CD8-positive, alpha-beta T cell (primary cell): ENCODE measurements at regions of chr18 and their contacts with region 1.

Region 1: GRCh38 chr18:3665780-3666525 is 216.0 kb downstream of the TGIF1 start:
- DNase-seq: peak; percentile 39 to 83 (median 75)
- ATAC-seq: peak; percentile 91
- H3K4me3 ChIP-seq: no peak overlapping the region
- H3K4me3 Mint-ChIP-seq: peak overlapping the region; percentile 35
- H3K27ac ChIP-seq: no peak overlapping the region
- H3K27ac Mint-ChIP-seq: no peak overlapping the region
- H3K4me1 ChIP-seq: no peaks in the 10 kb centered on the region
- H3K4me1 Mint-ChIP-seq: peaks cover 8% of the 10 kb centered on the region
- H3K27me3 ChIP-seq: no peaks in the 10 kb centered on the region
- H3K27me3 Mint-ChIP-seq: peaks cover 2% of the 10 kb centered on the region
- CTCF ChIP-seq: peak; percentile 96

Region 2: GRCh38 chr18:3151399-3152264 is 514.3 kb before region 1 on chr18:
- CTCF ChIA-PET with region 1: interaction called, 7 read pairs
- POLR2A ChIA-PET with region 1: no interaction called
- intact Hi-C with region 1: loop called in 1 of 2 experiments (anchors 5 kb)
- DNase-seq: peak in 2 of 9 experiments; percentile 46 to 55
- ATAC-seq: no peak
- H3K4me3 ChIP-seq: no peak overlapping the region
- H3K4me3 Mint-ChIP-seq: no peak overlapping the region
- H3K27ac ChIP-seq: no peak overlapping the region
- H3K27ac Mint-ChIP-seq: no peak overlapping the region
- H3K4me1 ChIP-seq: no peaks in the 10 kb centered on the region
- H3K4me1 Mint-ChIP-seq: peaks cover 4% of the 10 kb centered on the region
- H3K27me3 ChIP-seq: no peaks in the 10 kb centered on the region
- H3K27me3 Mint-ChIP-seq: no peaks in the 10 kb centered on the region
- CTCF ChIP-seq: peak; percentile 93

Region 3: GRCh38 chr18:3323900-3324299 is 342.1 kb before region 1 on chr18:
- CTCF ChIA-PET with region 1: interaction called, 15 read pairs
- POLR2A ChIA-PET with region 1: no interaction called
- intact Hi-C with region 1: no loop called
- DNase-seq: no peak
- ATAC-seq: no peak
- H3K4me3 ChIP-seq: no peak overlapping the region
- H3K4me3 Mint-ChIP-seq: no peak overlapping the region
- H3K27ac ChIP-seq: no peak overlapping the region
- H3K27ac Mint-ChIP-seq: no peak overlapping the region
- H3K4me1 ChIP-seq: no peaks in the 10 kb centered on the region
- H3K4me1 Mint-ChIP-seq: no peaks in the 10 kb centered on the region
- H3K27me3 ChIP-seq: no peaks in the 10 kb centered on the region
- H3K27me3 Mint-ChIP-seq: peaks cover 13% of the 10 kb centered on the region
- CTCF ChIP-seq: no peak

Region 4: DNA sequence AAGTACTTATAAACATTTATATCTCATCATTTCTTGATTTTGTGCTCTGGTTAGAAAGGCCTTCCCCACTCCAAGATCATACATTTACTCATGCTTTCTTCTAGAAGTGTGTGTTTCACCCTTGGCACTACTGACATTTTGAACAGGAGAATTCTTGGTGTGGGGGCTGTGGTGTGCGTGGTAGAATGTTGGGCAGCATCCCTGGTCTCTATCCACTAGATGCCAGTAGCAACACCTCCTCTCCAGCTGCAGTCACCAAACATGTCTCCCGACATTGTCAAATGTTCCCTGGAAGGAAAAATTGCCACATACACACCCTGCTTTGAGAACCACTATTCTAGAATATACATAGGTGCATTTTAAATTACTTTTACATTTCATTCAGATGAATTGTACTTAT is 224.7 kb before region 1 on chr18:
- CTCF ChIA-PET with region 1: interaction called, 22 read pairs
- POLR2A ChIA-PET with region 1: no interaction called
- intact Hi-C with region 1: loop called in 1 of 2 experiments (anchors 1 kb)
- DNase-seq: peak in 3 of 9 experiments; percentile 16 to 67 (median 56)
- ATAC-seq: peak; percentile 67
- H3K4me3 ChIP-seq: no peak overlapping the region
- H3K4me3 Mint-ChIP-seq: no peak overlapping the region
- H3K27ac ChIP-seq: no peak overlapping the region
- H3K27ac Mint-ChIP-seq: no peak overlapping the region
- H3K4me1 ChIP-seq: no peaks in the 10 kb centered on the region
- H3K4me1 Mint-ChIP-seq: peaks cover 5% of the 10 kb centered on the region
- H3K27me3 ChIP-seq: no peaks in the 10 kb centered on the region
- H3K27me3 Mint-ChIP-seq: no peaks in the 10 kb centered on the region
- CTCF ChIP-seq: peak; percentile 20

Region 5: GRCh38 chr18:3585656-3586509 is 80.1 kb before region 1 on chr18:
- CTCF ChIA-PET with region 1: interaction called, 39 read pairs
- POLR2A ChIA-PET with region 1: interaction called, 4 read pairs
- intact Hi-C with region 1: no loop called
- DNase-seq: peak in 8 of 9 experiments; percentile 40 to 83 (median 66)
- ATAC-seq: peak; percentile 87
- H3K4me3 ChIP-seq: no peak overlapping the region
- H3K4me3 Mint-ChIP-seq: no peak overlapping the region
- H3K27ac ChIP-seq: no peak overlapping the region
- H3K27ac Mint-ChIP-seq: no peak overlapping the region
- H3K4me1 ChIP-seq: no peaks in the 10 kb centered on the region
- H3K4me1 Mint-ChIP-seq: peaks cover 8% of the 10 kb centered on the region
- H3K27me3 ChIP-seq: no peaks in the 10 kb centered on the region
- H3K27me3 Mint-ChIP-seq: no peaks in the 10 kb centered on the region
- CTCF ChIP-seq: peak; percentile 56

Region 6: GRCh38 chr18:3623769-3624545 is 42.0 kb before region 1 on chr18:
- CTCF ChIA-PET with region 1: interaction called, 12 read pairs
- POLR2A ChIA-PET with region 1: no interaction called
- intact Hi-C with region 1: no loop called
- DNase-seq: no peak
- ATAC-seq: no peak
- H3K4me3 ChIP-seq: no peak overlapping the region
- H3K4me3 Mint-ChIP-seq: no peak overlapping the region
- H3K27ac ChIP-seq: no peak overlapping the region
- H3K27ac Mint-ChIP-seq: no peak overlapping the region
- H3K4me1 ChIP-seq: peaks cover 16% of the 10 kb centered on the region
- H3K4me1 Mint-ChIP-seq: peaks cover 7% of the 10 kb centered on the region
- H3K27me3 ChIP-seq: no peaks in the 10 kb centered on the region
- H3K27me3 Mint-ChIP-seq: no peaks in the 10 kb centered on the region
- CTCF ChIP-seq: no peak

Region 7: DNA sequence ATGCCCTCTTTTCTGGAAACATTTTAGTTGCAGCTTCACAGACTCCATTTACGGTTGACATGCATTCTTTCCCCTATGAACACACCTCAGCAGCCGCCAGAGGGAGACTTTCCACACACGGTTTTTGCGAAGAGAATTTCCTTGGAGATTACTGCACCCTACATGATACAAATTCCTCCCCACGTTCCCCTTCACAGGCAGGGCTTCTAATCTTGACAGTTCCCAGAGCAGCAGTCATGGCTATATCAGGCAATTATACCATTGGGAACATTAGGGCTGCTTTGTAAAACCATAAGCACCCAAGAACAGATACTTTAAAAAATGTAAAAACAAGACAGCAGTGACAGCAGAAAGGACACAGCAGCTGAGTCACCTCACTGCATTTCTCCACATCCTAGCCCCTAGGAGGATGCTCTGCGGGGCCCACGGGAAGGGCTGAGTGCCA is 37.8 kb after region 1 on chr18:
- CTCF ChIA-PET with region 1: no interaction called
- POLR2A ChIA-PET with region 1: no interaction called
- intact Hi-C with region 1: no loop called
- DNase-seq: peak in 4 of 9 experiments; percentile 6 to 28 (median 16)
- ATAC-seq: no peak
- H3K4me3 ChIP-seq: no peak overlapping the region
- H3K4me3 Mint-ChIP-seq: no peak overlapping the region
- H3K27ac ChIP-seq: no peak overlapping the region
- H3K27ac Mint-ChIP-seq: no peak overlapping the region
- H3K4me1 ChIP-seq: no peaks in the 10 kb centered on the region
- H3K4me1 Mint-ChIP-seq: peaks cover 2% of the 10 kb centered on the region
- H3K27me3 ChIP-seq: peaks cover 0 to 8% of the 10 kb centered on the region in 2 experiments
- H3K27me3 Mint-ChIP-seq: peaks cover 39% of the 10 kb centered on the region
- CTCF ChIP-seq: no peak